ENCODE measurements at regions of chr6 and their contacts with region 1.

Region 1: GRCh38 chr6:134938896-134939295 is 11.0 kb downstream of the ALDH8A1 start:
- DNase-seq: no peak
- ATAC-seq: no peak

Region 2: GRCh38 chr6:134152767-134153485 is 786.0 kb before region 1 on chr6:
- intact Hi-C with region 1: loop called (anchors 5 to 10 kb)
- DNase-seq: no peak
- ATAC-seq: no peak

Region 3: DNA sequence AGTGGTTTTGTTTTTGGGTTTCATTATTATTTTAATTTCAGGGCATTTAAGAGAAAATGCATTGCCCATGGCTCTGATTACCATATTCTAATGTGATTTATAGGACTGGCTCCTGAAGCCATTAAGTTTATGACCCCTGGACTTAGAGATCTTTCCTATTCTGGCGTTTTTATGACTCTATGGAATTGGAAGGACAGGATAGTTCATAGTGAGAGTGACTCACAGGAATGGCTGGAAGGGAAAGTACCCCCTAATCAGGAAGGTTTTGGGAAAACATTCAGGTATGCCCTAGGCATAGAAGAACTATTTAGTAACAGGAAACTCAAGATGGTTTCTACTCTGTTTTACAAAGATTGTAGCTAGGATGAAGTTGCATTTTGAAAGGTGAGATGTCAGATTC is 777.9 kb before region 1 on chr6:
- intact Hi-C with region 1: loop called (anchors 5 to 10 kb)
- DNase-seq: no peak
- ATAC-seq: peak in 1 of 2 donors; percentile 29

Region 4: DNA sequence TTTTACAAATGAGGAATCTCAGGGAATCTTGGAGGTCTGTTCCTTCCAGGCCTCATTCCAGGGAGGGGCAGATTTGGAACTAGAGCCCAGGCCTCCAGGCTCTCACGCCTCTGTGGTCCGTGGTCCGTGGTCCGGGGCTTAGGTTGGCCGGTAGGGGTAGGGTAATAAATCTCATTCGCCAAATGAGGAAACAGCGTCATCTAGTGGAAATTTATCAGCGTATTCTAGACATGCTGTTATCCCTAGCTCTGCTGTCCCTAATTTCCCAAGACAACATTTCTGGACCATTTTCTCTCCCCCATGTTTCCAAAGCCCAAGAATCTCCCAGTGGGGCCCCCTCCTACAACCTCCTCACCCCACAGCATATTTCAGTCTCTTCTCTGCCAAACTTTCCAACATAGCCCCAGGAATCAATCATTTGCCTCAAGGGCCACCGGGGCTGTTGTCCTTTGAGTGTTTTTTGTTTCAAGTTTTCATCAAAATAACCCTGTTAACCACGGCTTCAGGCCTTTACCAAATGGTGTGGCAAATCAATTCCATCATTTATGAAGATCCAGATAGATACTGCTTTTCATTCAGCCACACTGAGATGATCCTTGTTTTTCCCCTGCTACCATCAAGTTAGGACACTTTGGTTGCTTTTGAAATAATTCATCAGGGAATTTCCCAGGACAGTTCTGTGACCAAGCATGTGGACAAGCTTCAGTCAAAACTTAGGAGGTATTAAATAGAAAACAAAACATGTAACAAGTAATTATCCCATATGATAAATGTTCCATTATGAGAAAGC is 115.8 kb before region 1 on chr6:
- intact Hi-C with region 1: loop called in 1 of 2 experiments (anchors 10 kb)
- DNase-seq: peak; percentile 47
- ATAC-seq: peak; percentile 78 to 90

Measured in left cardiac atrium (tissue), 4 donors.